PC-3 (cell line): ENCODE measurements at regions of chr15 and their contacts with region 1.

Region 1: GRCh38 chr15:78000091-78000926 is 77.2 kb downstream of the TBC1D2B start:
- DNase-seq: peak; percentile 56
- ATAC-seq: peak; percentile 72
- H3K4me3 ChIP-seq: no peak overlapping the region
- H3K27ac ChIP-seq: no peak overlapping the region
- H3K4me1 ChIP-seq: peaks cover 6% of the 10 kb centered on the region; the same call in 1 of the 2 replicates
- H3K27me3 ChIP-seq: no peaks in the 10 kb centered on the region
- CTCF ChIP-seq: peak; percentile 63

Region 2: GRCh38 chr15:77966540-77967290 is 33.6 kb before region 1 on chr15:
- CTCF ChIA-PET with region 1: no interaction called
- POLR2A ChIA-PET with region 1: no interaction called
- intact Hi-C with region 1: loop called (anchors 5 kb)
- DNase-seq: peak; percentile 57
- ATAC-seq: peak; percentile 68; the same call in 1 of the 2 replicates
- H3K4me3 ChIP-seq: no peak overlapping the region
- H3K27ac ChIP-seq: no peak overlapping the region
- H3K4me1 ChIP-seq: no peaks in the 10 kb centered on the region
- H3K27me3 ChIP-seq: no peaks in the 10 kb centered on the region
- CTCF ChIP-seq: peak; percentile 93

Region 3: DNA sequence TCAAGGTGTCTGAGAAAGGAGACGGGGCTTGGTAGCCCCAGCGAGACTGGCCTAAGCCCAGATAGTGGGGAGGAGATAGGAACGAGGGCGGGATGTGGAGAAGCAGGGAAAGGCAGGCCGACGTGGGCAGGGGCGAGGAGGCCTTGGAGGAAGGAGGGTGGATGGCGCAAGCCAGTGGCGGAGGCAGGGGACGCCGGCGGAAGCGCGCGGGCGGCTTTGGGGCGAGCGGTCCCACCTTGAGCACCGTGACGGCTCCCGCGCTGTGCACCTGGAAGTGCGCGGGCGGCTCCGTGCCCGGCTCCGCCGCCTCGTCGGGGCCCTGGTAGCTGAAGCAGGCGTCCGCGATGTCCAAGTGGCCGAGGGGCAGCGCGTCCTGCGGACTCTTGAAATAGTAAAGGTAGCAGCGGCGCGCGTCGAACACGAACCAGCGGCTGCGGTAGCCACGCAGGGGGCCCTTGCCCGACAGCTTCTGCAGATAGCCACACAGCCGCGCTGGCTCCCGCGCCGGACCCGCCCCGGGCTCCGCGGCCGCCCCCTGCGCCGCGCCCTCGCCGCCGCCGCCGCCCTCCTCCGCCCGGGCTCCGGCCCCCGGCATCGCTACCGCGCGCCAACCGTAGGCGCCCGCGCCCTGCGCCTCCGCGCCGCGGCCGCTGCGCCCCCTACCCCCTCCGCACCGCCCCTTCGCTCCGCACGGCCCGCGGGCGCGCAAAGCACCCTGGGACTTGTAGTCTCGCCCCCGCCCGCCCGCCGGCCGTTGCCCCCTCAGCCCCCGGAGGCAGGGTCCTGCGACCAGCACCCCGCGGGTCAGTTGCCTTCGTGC is 77.0 kb after region 1 on chr15 and contains the start of gene TBC1D2B:
- CTCF ChIA-PET with region 1: no interaction called
- POLR2A ChIA-PET with region 1: no interaction called
- intact Hi-C with region 1: loop called (anchors 10 kb)
- DNase-seq: peak; percentile 52
- ATAC-seq: peak; percentile 66
- H3K4me3 ChIP-seq: peak within 1 kb of the TSS; percentile 78
- H3K27ac ChIP-seq: 0 out of 2 replicates have a peak within 1 kb of the TSS, but pooled peaks have one; percentile 25
- H3K4me1 ChIP-seq: peaks cover 15% of the 10 kb centered on the region
- H3K27me3 ChIP-seq: no peaks in the 10 kb centered on the region
- CTCF ChIP-seq: no peak
- total RNA-seq, gene TBC1D2B: 12.6 and 19.0 TPM in 2 replicates